Activated naive CD4-positive, alpha-beta T cell treated with anti-CD3 and anti-CD28 coated beads for 36 hours (primary cell): ENCODE measurements at regions of chr10 and their contacts with region 1.

Region 1: GRCh38 chr10:7410862-7411670 is at the start of gene SFMBT2:
- DNase-seq: peak; percentile 73
- H3K4me3 Mint-ChIP-seq: peak within 1 kb of the TSS; percentile 97
- H3K27ac Mint-ChIP-seq: peak within 1 kb of the TSS; percentile 92
- H3K4me1 Mint-ChIP-seq: peaks cover 32% of the 10 kb centered on the region
- H3K27me3 Mint-ChIP-seq: peaks cover 15% of the 10 kb centered on the region
- total RNA-seq, gene SFMBT2: 20.0 to 21.5 TPM

Region 2: GRCh38 chr10:6416892-6417512 is 994.1 kb before region 1 on chr10:
- CTCF ChIA-PET with region 1: no interaction called
- intact Hi-C with region 1: loop called (anchors 10 kb)
- DNase-seq: no peak
- H3K4me3 Mint-ChIP-seq: no peak overlapping the region
- H3K27ac Mint-ChIP-seq: no peak overlapping the region
- H3K4me1 Mint-ChIP-seq: no peaks in the 10 kb centered on the region
- H3K27me3 Mint-ChIP-seq: no peaks in the 10 kb centered on the region

Region 3: DNA sequence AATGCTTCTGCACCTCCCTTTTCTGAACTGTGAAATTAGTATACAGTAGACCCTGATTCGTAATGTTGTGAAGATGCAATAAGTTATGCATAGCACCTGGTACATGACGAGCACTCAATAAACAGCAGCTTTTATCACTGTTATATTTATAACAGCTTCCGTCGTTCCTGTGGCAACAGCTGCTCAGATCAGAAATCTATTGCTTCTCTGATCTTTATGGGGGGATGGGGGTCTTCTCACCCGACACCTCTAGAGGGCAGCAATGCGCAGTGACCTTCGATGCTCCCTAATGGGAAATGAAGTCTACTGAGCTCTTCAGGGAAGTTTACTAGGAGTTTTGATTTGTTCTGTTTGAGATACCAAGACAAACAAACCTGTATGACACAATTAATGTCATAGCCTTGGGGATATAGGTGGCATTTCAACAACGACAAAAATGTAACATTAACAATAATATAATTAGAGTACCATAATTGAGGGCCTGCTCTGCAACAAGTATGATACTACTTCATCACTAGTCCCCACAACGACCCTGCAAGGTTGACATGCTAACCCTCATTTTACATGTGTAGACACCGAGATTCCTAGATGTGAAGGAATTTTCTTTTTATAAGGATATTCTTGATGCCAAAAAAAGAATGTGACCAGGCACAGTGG is 289.8 kb before region 1 on chr10:
- CTCF ChIA-PET with region 1: interaction called, 21 read pairs
- intact Hi-C with region 1: loop called (anchors 1 kb)
- DNase-seq: peak; percentile 86
- H3K4me3 Mint-ChIP-seq: no peak overlapping the region
- H3K27ac Mint-ChIP-seq: no peak overlapping the region
- H3K4me1 Mint-ChIP-seq: peaks cover 5% of the 10 kb centered on the region
- H3K27me3 Mint-ChIP-seq: no peaks in the 10 kb centered on the region

Region 4: GRCh38 chr10:7192831-7193361 is 218.2 kb before region 1 on chr10:
- CTCF ChIA-PET with region 1: no interaction called
- intact Hi-C with region 1: loop called (anchors 1 kb)
- DNase-seq: peak; percentile 79
- H3K4me3 Mint-ChIP-seq: peak overlapping the region; percentile 56
- H3K27ac Mint-ChIP-seq: peak overlapping the region; percentile 88
- H3K4me1 Mint-ChIP-seq: peaks cover 74% of the 10 kb centered on the region
- H3K27me3 Mint-ChIP-seq: no peaks in the 10 kb centered on the region

Region 5: GRCh38 chr10:7362471-7362870 is 48.6 kb before region 1 on chr10:
- CTCF ChIA-PET with region 1: no interaction called
- intact Hi-C with region 1: no loop called
- DNase-seq: no peak
- H3K4me3 Mint-ChIP-seq: no peak overlapping the region
- H3K27ac Mint-ChIP-seq: no peak overlapping the region
- H3K4me1 Mint-ChIP-seq: peaks cover 23% of the 10 kb centered on the region
- H3K27me3 Mint-ChIP-seq: no peaks in the 10 kb centered on the region

Region 6: GRCh38 chr10:7373039-7373438 is 38.0 kb before region 1 on chr10:
- CTCF ChIA-PET with region 1: no interaction called
- intact Hi-C with region 1: no loop called
- DNase-seq: no peak
- H3K4me3 Mint-ChIP-seq: no peak overlapping the region
- H3K27ac Mint-ChIP-seq: no peak overlapping the region
- H3K4me1 Mint-ChIP-seq: peaks cover 11% of the 10 kb centered on the region
- H3K27me3 Mint-ChIP-seq: no peaks in the 10 kb centered on the region

Region 7: DNA sequence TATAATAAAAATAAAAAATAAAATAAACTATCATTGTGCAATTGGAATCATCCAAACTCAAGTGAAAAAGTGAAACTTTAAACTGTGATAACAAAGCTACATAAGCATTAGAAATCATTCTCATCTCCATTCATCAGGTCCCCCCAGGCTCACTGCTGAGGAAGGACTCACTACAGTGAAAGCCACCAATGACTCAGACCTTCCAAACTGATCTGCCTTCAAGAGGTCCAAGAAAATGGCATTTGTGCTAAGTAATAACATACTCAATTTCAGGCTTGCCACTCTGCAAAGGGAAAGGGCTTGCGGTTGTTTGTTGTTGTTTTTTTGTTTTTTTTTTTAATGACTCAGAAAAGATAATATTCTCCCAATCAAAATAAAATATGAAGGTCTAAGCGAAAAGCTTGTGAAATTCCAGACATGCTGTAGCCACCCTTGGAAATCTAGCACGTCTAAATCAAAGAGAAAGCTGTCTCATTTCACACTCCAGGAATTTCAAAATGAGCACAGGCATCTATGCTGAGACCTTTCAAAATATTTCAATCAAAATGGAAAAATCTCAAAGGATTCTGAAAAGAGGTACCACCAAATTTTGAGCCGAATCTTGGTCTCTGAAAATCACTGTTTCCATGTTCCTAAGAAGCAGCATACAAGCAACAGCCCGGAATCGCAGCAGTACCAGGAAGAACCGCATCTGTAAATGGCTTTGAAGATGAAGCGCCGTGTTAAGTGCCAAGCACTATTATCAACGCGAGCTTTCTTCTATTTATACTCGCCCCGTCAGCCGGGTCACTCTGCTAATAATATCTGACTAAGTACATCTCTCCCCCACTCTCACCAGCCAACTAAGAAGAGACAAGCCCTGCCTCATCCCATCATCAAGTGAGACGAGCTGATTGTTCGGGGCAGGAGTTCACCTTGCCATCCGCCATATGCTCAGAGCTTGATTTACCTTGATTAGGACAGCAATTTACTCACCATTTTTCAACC is 13.7 kb before region 1 on chr10:
- CTCF ChIA-PET with region 1: no interaction called
- intact Hi-C with region 1: loop called (anchors 1 kb)
- DNase-seq: peak; percentile 66
- H3K4me3 Mint-ChIP-seq: no peak overlapping the region
- H3K27ac Mint-ChIP-seq: no peak overlapping the region
- H3K4me1 Mint-ChIP-seq: peaks cover 68% of the 10 kb centered on the region
- H3K27me3 Mint-ChIP-seq: no peaks in the 10 kb centered on the region

Region 8: GRCh38 chr10:7986851-7987250 is 575.8 kb after region 1 on chr10:
- CTCF ChIA-PET with region 1: no interaction called
- intact Hi-C with region 1: no loop called
- DNase-seq: no peak
- H3K4me3 Mint-ChIP-seq: no peak overlapping the region
- H3K27ac Mint-ChIP-seq: no peak overlapping the region
- H3K4me1 Mint-ChIP-seq: no peaks in the 10 kb centered on the region
- H3K27me3 Mint-ChIP-seq: no peaks in the 10 kb centered on the region